CD8-positive, alpha-beta T cell (primary cell): ENCODE measurements at regions of chr9 and their contacts with region 1.

Region 1: GRCh38 chr9:34328987-34329832 is at the starts of genes KIF24 and NUDT2:
- DNase-seq: peak; percentile 86 to 100 (median 93)
- ATAC-seq: peak; percentile 91
- H3K4me3 ChIP-seq: peak within 1 kb of the TSS; percentile 95 to 96
- H3K4me3 Mint-ChIP-seq: peak within 1 kb of the TSS; percentile 90
- H3K27ac ChIP-seq: peak within 1 kb of the TSS; percentile 92 to 93
- H3K27ac Mint-ChIP-seq: peak within 1 kb of the TSS; percentile 92
- H3K4me1 ChIP-seq: no peaks in the 10 kb centered on the region
- H3K4me1 Mint-ChIP-seq: peaks cover 23% of the 10 kb centered on the region
- H3K27me3 ChIP-seq: no peaks in the 10 kb centered on the region
- H3K27me3 Mint-ChIP-seq: no peaks in the 10 kb centered on the region
- CTCF ChIP-seq: no peak
- total RNA-seq, gene KIF24: 0.08 to 0.14 TPM
- total RNA-seq, gene NUDT2: 9.7 to 10.2 TPM

Region 2: GRCh38 chr9:34048923-34049697 is 280.1 kb before region 1 on chr9:
- CTCF ChIA-PET with region 1: no interaction called
- POLR2A ChIA-PET with region 1: no interaction called
- intact Hi-C with region 1: loop called (anchors 1 kb)
- DNase-seq: peak; percentile 92 to 99 (median 97)
- ATAC-seq: peak; percentile 81
- H3K4me3 ChIP-seq: peak overlapping the region; percentile 76 to 79
- H3K4me3 Mint-ChIP-seq: peak overlapping the region; percentile 97
- H3K27ac ChIP-seq: peak overlapping the region; percentile 87 to 95
- H3K27ac Mint-ChIP-seq: peak overlapping the region; percentile 100
- H3K4me1 ChIP-seq: peaks cover 23% of the 10 kb centered on the region
- H3K4me1 Mint-ChIP-seq: peaks cover 29% of the 10 kb centered on the region
- H3K27me3 ChIP-seq: no peaks in the 10 kb centered on the region
- H3K27me3 Mint-ChIP-seq: no peaks in the 10 kb centered on the region
- CTCF ChIP-seq: no peak

Region 3: GRCh38 chr9:34139477-34140146 is 189.6 kb before region 1 on chr9:
- CTCF ChIA-PET with region 1: no interaction called
- POLR2A ChIA-PET with region 1: no interaction called
- intact Hi-C with region 1: no loop called
- DNase-seq: peak in 2 of 9 experiments; percentile 23 to 28
- ATAC-seq: no peak
- H3K4me3 ChIP-seq: no peak overlapping the region
- H3K4me3 Mint-ChIP-seq: no peak overlapping the region
- H3K27ac ChIP-seq: no peak overlapping the region
- H3K27ac Mint-ChIP-seq: no peak overlapping the region
- H3K4me1 ChIP-seq: no peaks in the 10 kb centered on the region
- H3K4me1 Mint-ChIP-seq: peaks cover 6% of the 10 kb centered on the region
- H3K27me3 ChIP-seq: no peaks in the 10 kb centered on the region
- H3K27me3 Mint-ChIP-seq: no peaks in the 10 kb centered on the region
- CTCF ChIP-seq: no peak

Region 4: DNA sequence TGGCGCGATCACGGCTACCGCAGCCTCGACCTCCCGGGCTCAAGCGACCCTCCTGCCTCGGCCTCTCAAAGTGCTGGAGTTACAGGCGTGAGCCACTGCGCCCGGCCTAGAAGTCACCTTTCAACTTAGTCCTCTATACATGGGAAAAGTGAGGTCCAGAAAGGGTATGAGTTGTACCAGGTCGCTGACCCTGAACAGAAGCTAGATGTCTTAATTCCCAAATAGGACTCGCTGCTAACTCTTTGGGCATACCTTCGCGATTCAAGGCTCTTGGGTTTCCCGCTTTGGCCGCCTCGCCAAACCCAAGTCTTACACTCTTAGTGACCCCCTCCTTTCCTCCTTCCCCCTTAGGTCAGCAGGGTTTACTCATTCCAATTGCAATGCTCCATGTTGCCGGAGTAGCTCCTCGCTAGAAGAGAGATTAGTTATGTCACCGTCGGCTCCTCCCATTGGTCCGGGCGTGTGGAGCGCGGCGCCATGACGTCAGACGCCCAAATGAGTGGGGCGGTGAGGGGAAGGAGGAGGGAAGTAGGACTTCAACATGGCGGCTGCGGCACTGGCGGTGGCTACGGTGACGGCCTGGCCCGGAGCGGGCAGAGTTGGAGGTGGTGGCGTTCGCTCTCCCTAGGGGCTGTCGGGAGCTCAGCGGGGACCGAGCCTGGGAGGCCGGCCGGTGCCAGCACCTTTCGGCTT is 150.5 kb before region 1 on chr9 and contains the start of gene UBAP1:
- CTCF ChIA-PET with region 1: no interaction called
- POLR2A ChIA-PET with region 1: no interaction called
- intact Hi-C with region 1: loop called in 1 of 2 experiments (anchors 1 kb)
- DNase-seq: peak; percentile 89 to 98 (median 95)
- ATAC-seq: peak; percentile 98
- H3K4me3 ChIP-seq: peak within 1 kb of the TSS; percentile 88 to 93
- H3K4me3 Mint-ChIP-seq: peak within 1 kb of the TSS; percentile 97
- H3K27ac ChIP-seq: peak within 1 kb of the TSS; percentile 92 to 96
- H3K27ac Mint-ChIP-seq: peak within 1 kb of the TSS; percentile 98
- H3K4me1 ChIP-seq: peaks cover 9% of the 10 kb centered on the region
- H3K4me1 Mint-ChIP-seq: peaks cover 24% of the 10 kb centered on the region
- H3K27me3 ChIP-seq: no peaks in the 10 kb centered on the region
- H3K27me3 Mint-ChIP-seq: no peaks in the 10 kb centered on the region
- CTCF ChIP-seq: no peak
- total RNA-seq, gene UBAP1: 70.9 to 73.2 TPM

Region 5: DNA sequence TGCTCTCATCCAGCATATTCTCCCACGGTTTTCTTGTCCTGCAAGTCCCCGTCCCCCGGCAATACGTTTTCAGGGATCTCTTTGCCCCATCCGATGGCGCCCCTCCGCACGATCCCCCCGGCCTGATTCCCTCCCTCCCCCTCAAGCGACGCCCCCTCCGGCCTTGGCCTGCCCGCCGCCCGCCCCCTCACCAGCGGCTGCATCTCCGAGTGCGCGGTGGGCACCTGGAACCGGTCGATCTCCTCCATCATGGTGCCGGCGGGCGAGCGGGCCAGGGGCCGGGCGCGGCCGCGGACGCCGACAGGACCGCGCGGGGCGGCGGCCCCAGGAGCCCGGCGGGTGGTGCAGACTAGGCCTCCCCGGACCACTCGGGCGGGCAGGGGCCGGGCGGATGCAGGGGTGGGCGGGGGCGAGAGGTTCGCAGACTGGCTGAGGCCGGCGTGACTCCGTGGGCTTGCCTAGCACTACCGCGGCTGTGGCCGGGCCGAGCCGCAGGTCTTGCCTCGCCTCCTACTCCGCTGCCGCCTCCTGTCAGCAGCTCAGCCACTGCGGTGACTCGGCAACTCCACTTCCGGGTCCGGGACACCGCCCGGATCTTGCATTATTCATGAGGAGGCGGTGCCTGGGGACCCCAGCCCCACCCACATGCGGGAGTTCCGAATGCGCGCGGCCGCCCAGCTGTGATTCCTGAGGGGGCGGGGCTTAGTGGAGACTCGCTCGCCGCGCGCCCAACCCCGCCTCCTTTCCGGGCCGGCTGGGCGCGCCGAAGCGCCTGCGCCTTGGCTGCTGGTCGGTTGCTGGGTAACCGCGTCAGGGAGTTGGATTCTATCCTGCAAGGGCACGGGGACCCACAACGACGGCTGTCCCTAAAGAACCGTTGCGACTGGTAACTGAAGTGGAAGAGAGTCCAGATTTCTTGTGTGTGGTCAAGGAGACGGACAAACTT is 129.1 kb after region 1 on chr9 and contains the starts of genes DNAI1 and FAM219A:
- CTCF ChIA-PET with region 1: interaction called, 3 read pairs
- POLR2A ChIA-PET with region 1: no interaction called
- intact Hi-C with region 1: loop called (anchors 1 to 2 kb)
- DNase-seq: peak; percentile 98 to 99 (median 99)
- ATAC-seq: peak; percentile 96
- H3K4me3 ChIP-seq: peak within 1 kb of the TSS; percentile 61 to 67
- H3K4me3 Mint-ChIP-seq: peak within 1 kb of the TSS; percentile 91
- H3K27ac ChIP-seq: peak within 1 kb of the TSS in 1 of 2 experiments; percentile 29
- H3K27ac Mint-ChIP-seq: peak within 1 kb of the TSS; percentile 46
- H3K4me1 ChIP-seq: peaks cover 14% of the 10 kb centered on the region
- H3K4me1 Mint-ChIP-seq: peaks cover 30% of the 10 kb centered on the region
- H3K27me3 ChIP-seq: no peaks in the 10 kb centered on the region
- H3K27me3 Mint-ChIP-seq: no peaks in the 10 kb centered on the region
- CTCF ChIP-seq: no peak
- total RNA-seq, gene DNAI1: not detected
- total RNA-seq, gene FAM219A: 5.5 to 5.9 TPM

Region 6: DNA sequence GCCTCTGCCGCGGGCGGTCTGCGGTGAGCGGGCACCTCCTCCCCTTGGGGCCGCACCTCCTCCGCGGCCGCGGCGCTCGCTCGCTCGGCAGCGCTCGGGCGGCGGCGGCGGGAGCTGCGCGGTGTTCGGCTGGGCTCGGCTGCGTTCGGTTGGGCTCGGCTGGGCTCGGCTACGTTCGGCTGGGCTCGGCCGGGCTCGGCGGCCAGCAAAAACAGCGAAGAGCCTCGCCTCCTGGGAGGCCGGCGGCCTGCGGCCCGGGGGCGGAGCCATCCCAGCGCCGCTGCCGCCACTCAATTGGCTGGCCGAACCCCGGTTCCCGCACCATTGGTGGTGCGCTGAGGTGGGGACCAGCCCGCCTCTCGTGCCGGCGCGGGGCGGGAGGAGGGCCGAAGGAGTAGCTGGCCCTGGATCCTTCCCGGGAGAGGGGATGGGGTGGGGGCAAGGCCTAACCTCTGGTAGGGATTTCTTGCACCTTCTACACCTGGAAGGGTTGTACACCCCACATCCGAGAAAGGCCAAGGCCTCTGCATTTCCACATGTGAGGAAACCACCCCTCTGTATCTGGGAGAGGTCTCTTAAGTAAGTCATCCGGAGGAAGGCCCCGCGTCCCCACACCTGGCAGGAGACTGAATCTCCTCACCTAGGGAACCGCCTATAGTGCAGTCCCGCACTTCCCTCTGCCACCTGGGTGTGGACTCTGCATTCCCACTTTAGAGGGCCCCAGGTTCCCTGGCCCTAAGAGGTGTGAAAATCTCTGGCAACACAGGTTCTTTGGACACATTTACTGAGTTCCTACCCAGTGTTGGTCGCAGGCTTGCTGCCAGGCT is 194.0 kb after region 1 on chr9 and contains the start of gene ENHO:
- CTCF ChIA-PET with region 1: no interaction called
- POLR2A ChIA-PET with region 1: no interaction called
- intact Hi-C with region 1: loop called in 1 of 2 experiments (anchors 5 kb)
- DNase-seq: peak; percentile 79 to 96 (median 87)
- ATAC-seq: peak; percentile 97
- H3K4me3 ChIP-seq: peak within 1 kb of the TSS; percentile 48 to 70
- H3K4me3 Mint-ChIP-seq: peak within 1 kb of the TSS; percentile 83
- H3K27ac ChIP-seq: peak within 1 kb of the TSS in 1 of 2 experiments; percentile 33
- H3K27ac Mint-ChIP-seq: no peak within 1 kb of the TSS
- H3K4me1 ChIP-seq: peaks cover 9% of the 10 kb centered on the region
- H3K4me1 Mint-ChIP-seq: peaks cover 4% of the 10 kb centered on the region
- H3K27me3 ChIP-seq: no peaks in the 10 kb centered on the region
- H3K27me3 Mint-ChIP-seq: peaks cover 2% of the 10 kb centered on the region
- CTCF ChIP-seq: no peak
- total RNA-seq, gene ENHO: not detected

Region 7: GRCh38 chr9:34611829-34612630 is 282.8 kb after region 1 on chr9 and contains the start of gene RPP25L:
- CTCF ChIA-PET with region 1: no interaction called
- POLR2A ChIA-PET with region 1: no interaction called
- intact Hi-C with region 1: loop called in 1 of 2 experiments (anchors 2 kb)
- DNase-seq: peak; percentile 65 to 92 (median 85)
- ATAC-seq: peak; percentile 95
- H3K4me3 ChIP-seq: peak within 1 kb of the TSS; percentile 88 to 93
- H3K4me3 Mint-ChIP-seq: peak within 1 kb of the TSS; percentile 85
- H3K27ac ChIP-seq: peak within 1 kb of the TSS; percentile 77 to 91
- H3K27ac Mint-ChIP-seq: peak within 1 kb of the TSS; percentile 91
- H3K4me1 ChIP-seq: peaks cover 17% of the 10 kb centered on the region
- H3K4me1 Mint-ChIP-seq: peaks cover 23% of the 10 kb centered on the region
- H3K27me3 ChIP-seq: no peaks in the 10 kb centered on the region
- H3K27me3 Mint-ChIP-seq: no peaks in the 10 kb centered on the region
- CTCF ChIP-seq: no peak
- total RNA-seq, gene RPP25L: 4.4 to 5.1 TPM

Region 8: GRCh38 chr9:34825775-34826174 is 496.6 kb after region 1 on chr9:
- CTCF ChIA-PET with region 1: no interaction called
- POLR2A ChIA-PET with region 1: no interaction called
- intact Hi-C with region 1: no loop called
- DNase-seq: no peak
- ATAC-seq: no peak
- H3K4me3 ChIP-seq: no peak overlapping the region
- H3K4me3 Mint-ChIP-seq: no peak overlapping the region
- H3K27ac ChIP-seq: no peak overlapping the region
- H3K27ac Mint-ChIP-seq: no peak overlapping the region
- H3K4me1 ChIP-seq: no peaks in the 10 kb centered on the region
- H3K4me1 Mint-ChIP-seq: no peaks in the 10 kb centered on the region
- H3K27me3 ChIP-seq: no peaks in the 10 kb centered on the region
- H3K27me3 Mint-ChIP-seq: peaks cover 31% of the 10 kb centered on the region
- CTCF ChIP-seq: no peak